SK-N-SH (cell line): ENCODE measurements at regions of chr10 and their contacts with region 1.

Region 1: GRCh38 chr10:5889624-5890451 is at the starts of genes ANKRD16 and FBH1:
- DNase-seq: peak; percentile 99
- H3K4me3 ChIP-seq: peak within 1 kb of the TSS; percentile 79 to 89
- H3K27ac ChIP-seq: peak within 1 kb of the TSS; percentile 76 to 79; a peak in 3 of 4 replicates
- H3K4me1 ChIP-seq: peaks cover 12 to 22% of the 10 kb centered on the region in 2 experiments; a peak in 3 of 4 replicates
- H3K27me3 ChIP-seq: no peaks in the 10 kb centered on the region
- CTCF ChIP-seq: no peak
- EP300 ChIP-seq: 0 out of 4 replicates have a peak, but pooled peaks of 1 of the 2 experiments have one; percentile 8
- RAD21 ChIP-seq: no peak
- polyA plus RNA-seq, gene ANKRD16: 9.9 and 11.9 TPM in 2 replicates
- polyA plus RNA-seq, gene FBH1: 60.9 and 71.9 TPM in 2 replicates

Region 2: DNA sequence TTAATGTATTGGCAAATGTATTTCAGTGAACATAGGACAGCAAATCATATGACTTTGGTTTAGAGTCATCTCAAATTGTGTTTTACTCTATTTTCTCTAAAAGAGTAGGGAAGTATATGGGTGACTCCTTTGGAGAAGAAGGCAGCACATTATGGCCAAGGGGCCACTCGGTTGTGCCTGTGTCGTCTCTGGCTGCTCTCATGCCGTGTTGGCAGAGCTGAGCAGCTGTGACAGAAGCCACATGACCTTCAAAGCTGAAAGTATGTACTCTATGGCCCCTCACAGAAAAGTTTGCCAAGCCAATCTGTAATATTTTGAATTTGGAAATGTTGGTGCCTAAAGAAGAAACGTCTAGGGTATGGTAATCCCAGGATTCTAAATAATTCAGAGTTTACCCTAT is 157.7 kb before region 1 on chr10:
- CTCF ChIA-PET with region 1: no interaction called
- POLR2A ChIA-PET with region 1: no interaction called
- DNase-seq: no peak
- H3K4me3 ChIP-seq: no peak overlapping the region
- H3K27ac ChIP-seq: no peak overlapping the region
- H3K4me1 ChIP-seq: no peaks in the 10 kb centered on the region
- H3K27me3 ChIP-seq: no peaks in the 10 kb centered on the region
- CTCF ChIP-seq: no peak
- EP300 ChIP-seq: no peak
- RAD21 ChIP-seq: no peak

Region 3: DNA sequence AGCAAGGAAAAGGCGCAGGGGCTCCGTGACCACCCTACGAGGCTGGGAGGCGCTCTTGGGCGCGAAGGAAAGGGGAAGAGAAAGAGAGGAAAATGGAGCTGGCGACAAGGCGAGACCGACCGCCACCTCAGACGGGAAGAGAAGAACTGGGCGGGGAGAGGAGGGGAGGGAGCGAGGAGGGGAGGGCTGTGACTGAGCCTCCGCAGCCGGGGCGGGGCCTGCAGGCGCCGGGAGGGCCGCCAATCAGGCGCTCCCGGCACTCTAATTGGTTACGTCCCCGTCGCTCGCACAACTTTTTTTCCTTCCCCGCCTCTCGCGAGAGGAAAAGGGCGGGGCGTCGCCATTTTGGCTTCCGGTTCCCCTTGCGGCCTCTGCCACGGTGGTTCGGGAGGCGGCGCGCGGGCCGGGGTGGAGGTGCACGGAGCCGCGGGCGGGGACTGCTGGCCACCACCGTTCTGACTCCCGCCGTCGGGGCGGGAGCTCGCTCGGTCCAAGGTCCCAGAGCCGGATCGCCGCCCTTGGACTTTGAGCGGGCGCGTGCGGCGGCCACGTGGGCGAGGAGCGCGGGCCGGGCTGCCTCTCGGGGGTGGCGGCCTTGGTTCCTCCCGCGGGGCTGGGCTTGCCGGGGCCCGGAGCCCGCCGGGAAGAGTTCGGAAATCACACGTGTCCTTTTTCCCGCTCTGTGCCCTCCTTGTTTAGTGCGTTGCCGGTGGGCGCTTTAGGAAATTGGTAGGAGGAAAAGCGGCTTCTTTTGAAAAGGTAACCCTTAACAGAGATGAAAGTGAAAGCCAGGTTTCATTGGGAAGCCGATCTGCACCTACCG is 76.3 kb before region 1 on chr10 and contains the start of gene GDI2:
- CTCF ChIA-PET with region 1: no interaction called
- POLR2A ChIA-PET with region 1: interaction called, 17 read pairs
- DNase-seq: peak; percentile 99
- H3K4me3 ChIP-seq: peak within 1 kb of the TSS; percentile 79 to 98
- H3K27ac ChIP-seq: peak within 1 kb of the TSS; percentile 94 to 96
- H3K4me1 ChIP-seq: peaks cover 18 to 22% of the 10 kb centered on the region in 2 experiments; a peak in 3 of 4 replicates
- H3K27me3 ChIP-seq: no peaks in the 10 kb centered on the region
- CTCF ChIP-seq: no peak
- EP300 ChIP-seq: no peak; a peak in 1 of 4 replicates
- RAD21 ChIP-seq: 0 out of 2 replicates have a peak, but pooled peaks have one; percentile 9
- polyA plus RNA-seq, gene GDI2: 94.3 and 99.1 TPM in 2 replicates

Region 4: DNA sequence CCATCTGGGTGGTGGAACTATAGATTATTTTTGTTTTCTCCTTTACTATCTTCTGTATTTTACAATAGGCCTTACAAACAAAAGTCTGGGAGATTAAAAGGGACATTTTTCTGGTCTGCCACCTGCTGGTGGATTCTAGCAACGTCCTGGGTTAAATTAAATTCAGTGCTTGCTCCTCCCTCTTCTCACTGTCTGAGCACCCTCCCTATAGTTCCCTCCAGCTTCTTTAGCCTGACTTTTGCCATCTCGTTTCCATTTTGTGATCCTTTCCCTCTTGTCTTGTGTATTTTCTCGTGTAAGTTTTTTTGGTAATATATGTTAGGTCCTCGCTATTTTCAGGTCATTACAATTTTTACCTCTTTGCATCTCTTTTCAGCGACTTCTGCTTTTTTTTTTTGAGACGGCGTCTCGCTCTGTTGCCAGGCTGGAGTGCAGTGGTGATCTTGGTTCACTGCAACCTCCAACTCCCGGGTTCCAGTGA is 16.3 kb before region 1 on chr10:
- CTCF ChIA-PET with region 1: interaction called, 10 read pairs
- POLR2A ChIA-PET with region 1: interaction called, 12 read pairs
- DNase-seq: peak; percentile 81
- H3K4me3 ChIP-seq: no peak overlapping the region; a peak in 1 of 4 replicates
- H3K27ac ChIP-seq: no peak overlapping the region
- H3K4me1 ChIP-seq: peaks cover 8 to 14% of the 10 kb centered on the region in 2 experiments; a peak in 2 of 4 replicates
- H3K27me3 ChIP-seq: no peaks in the 10 kb centered on the region
- CTCF ChIP-seq: peak; percentile 78
- EP300 ChIP-seq: no peak
- RAD21 ChIP-seq: peak; percentile 71